Head of caudate nucleus (tissue), 42 donors: ENCODE measurements at regions of chr16 and their contacts with region 1.

Region 1: GRCh38 chr16:69930117-69930776 is 20.9 kb upstream of the CLEC18A start:
- DNase-seq: peak in 34 of 42 donors; percentile 16 to 83 (median 51)

Region 2: DNA sequence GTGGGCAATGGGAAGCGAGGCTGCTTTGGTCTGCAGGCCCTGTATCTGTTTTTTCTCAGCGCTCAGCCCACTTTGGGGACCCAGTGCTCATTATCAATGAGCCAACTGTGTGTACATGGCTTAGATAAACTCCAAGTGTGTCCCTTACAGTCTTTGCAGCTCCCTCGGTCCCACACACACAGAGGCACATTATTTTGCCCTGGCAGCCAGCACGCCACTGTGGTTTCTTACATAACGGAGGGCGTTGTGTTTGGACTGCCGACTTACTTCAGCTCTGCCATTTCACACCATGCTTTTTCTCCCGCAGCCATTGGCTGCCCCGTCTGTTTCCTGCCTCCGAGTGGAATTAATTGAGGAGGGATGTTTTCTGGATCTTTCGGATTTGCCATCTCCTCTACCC is 35.6 kb before region 1 on chr16:
- intact Hi-C with region 1: loop called (anchors 5 kb)
- DNase-seq: peak; percentile 44 to 92 (median 82)